H1 (cell line): ENCODE measurements at regions of chr19 and their contacts with region 1.

Region 1: DNA sequence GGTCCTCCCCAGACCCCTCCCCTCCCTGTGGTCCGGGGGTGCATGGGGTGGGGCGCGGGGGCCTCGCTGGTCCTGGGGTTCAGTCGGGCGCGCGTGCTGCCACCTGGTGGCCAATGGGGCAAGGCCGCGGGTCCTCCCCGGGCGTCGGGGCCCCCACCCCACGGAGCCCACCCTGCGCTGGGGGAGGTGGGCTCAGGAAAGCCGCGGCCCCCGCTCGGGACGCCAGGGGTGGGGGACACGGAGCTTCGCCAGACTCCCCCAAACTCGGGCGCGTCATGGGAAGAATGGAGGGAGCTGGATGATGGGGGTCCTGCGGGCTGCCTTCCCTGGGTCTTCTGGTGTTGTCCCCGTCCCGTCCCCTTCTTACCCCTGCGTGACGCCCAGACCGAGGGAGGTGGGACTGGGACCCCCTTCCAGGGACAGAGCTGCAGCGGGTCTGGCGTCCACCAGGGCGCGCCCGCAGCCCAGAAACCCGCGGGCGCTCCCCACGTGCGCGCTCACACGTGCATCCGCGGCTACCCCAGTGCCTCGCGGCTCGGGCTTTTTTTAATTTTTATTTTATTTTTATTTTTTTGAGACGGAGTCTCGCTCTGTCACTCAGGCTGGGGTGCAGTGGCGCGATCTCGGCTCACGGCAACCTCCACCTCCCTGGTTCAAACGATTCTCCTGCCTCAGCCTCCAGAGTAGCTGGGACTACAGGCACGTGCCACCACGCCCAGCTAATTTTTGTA is 19.8 kb upstream of the TCF3 start:
- DNase-seq: peak in 1 of 2 experiments; percentile 81
- H3K4me3 ChIP-seq: peak overlapping the region in 3 of 4 experiments; percentile 5 to 60 (median 6); a peak in 4 of 8 replicates
- H3K27ac ChIP-seq: no peak overlapping the region
- H3K4me1 ChIP-seq: peaks cover 0 to 16% (median 10%) of the 10 kb centered on the region in 4 experiments; a peak in 6 of 7 replicates
- H3K27me3 ChIP-seq: peaks cover 34 to 91% (median 80%) of the 10 kb centered on the region in 4 experiments
- CTCF ChIP-seq: peak; percentile 47 to 82 (median 80)
- EP300 ChIP-seq: no peak
- POLR2A ChIP-seq: no peak
- RAD21 ChIP-seq: peak; percentile 79 to 85

Region 2: DNA sequence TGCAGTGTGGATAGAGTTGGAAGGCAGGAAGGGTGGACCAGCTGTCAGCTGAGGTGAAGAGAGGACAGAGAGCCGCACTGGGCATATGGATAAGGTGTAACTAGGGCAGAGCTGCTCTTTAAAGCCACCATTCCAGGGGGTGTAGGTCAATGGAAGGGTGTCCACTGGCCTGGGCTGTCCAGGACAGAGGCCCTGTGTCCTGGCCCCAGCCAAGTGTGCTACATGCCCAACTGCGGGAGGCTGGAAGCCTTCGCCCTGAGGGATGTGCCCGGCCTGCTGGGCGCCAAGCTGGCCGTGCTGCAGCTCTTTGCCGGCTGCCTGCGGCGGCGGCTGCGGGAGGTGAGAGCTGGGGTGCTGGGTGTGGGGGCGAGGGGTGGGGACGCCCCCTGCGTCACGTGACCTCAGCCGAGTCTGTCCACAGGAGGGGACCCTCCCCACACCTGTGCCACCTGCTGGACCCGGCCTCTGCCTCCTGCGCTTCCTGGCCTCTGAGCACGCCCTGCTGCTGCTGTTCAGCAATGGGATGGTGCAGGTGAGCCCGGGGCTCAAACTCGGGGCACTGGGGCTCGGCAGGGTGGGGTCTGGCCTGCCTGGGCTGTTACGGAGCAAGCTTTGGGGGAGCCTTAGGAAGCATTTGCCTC is 138.6 kb before region 1 on chr19:
- CTCF ChIA-PET with region 1: no interaction called
- POLR2A ChIA-PET with region 1: no interaction called
- DNase-seq: no peak
- H3K4me3 ChIP-seq: no peak overlapping the region
- H3K27ac ChIP-seq: no peak overlapping the region
- H3K4me1 ChIP-seq: no peaks in the 10 kb centered on the region
- H3K27me3 ChIP-seq: no peaks in the 10 kb centered on the region; a peak in 1 of 7 replicates
- CTCF ChIP-seq: no peak
- EP300 ChIP-seq: no peak
- POLR2A ChIP-seq: no peak
- RAD21 ChIP-seq: no peak

Region 3: GRCh38 chr19:1560286-1560882 is 111.8 kb before region 1 on chr19:
- CTCF ChIA-PET with region 1: no interaction called
- POLR2A ChIA-PET with region 1: no interaction called
- DNase-seq: no peak
- H3K4me3 ChIP-seq: no peak overlapping the region
- H3K27ac ChIP-seq: no peak overlapping the region
- H3K4me1 ChIP-seq: no peaks in the 10 kb centered on the region; a peak in 1 of 7 replicates
- H3K27me3 ChIP-seq: no peaks in the 10 kb centered on the region
- CTCF ChIP-seq: no peak
- EP300 ChIP-seq: no peak
- POLR2A ChIP-seq: no peak
- RAD21 ChIP-seq: no peak

Region 4: DNA sequence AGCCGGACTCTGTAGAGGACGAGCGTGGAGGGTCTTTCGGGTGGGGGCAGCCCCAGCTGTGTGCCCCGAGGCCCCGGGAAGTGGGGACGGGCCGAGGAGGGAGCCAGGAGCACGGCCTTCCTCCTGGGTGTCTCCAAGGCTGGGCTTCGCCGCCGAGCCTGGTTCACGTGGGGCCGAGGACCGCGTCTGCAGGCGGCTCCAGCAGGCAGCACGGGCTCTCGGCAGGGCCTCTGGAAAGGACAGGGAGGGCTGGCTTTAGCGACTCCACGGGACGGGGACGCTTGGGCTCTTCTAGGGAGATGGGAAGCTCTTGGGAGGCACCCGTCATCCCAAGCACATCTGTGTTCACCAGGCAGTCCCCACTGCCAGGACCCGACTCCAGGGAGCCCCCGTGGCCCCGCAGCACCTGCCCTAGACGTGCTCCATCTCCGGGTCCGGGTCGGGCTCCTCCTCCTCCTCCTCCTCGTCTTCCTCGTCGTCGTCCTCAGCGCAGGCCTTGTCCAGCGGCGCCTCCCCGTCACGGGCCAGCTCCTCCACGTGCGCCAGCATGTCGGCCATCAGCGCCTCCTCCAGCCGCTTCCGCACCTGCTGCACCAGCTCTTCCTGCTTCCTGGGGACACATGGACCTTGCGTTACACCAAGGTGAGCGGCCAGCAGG is 94.1 kb before region 1 on chr19:
- CTCF ChIA-PET with region 1: no interaction called
- POLR2A ChIA-PET with region 1: no interaction called
- DNase-seq: no peak
- H3K4me3 ChIP-seq: no peak overlapping the region
- H3K27ac ChIP-seq: no peak overlapping the region; the same call in 1 of the 2 replicates
- H3K4me1 ChIP-seq: no peaks in the 10 kb centered on the region
- H3K27me3 ChIP-seq: no peaks in the 10 kb centered on the region
- CTCF ChIP-seq: no peak
- EP300 ChIP-seq: no peak
- POLR2A ChIP-seq: no peak
- RAD21 ChIP-seq: no peak

Region 5: DNA sequence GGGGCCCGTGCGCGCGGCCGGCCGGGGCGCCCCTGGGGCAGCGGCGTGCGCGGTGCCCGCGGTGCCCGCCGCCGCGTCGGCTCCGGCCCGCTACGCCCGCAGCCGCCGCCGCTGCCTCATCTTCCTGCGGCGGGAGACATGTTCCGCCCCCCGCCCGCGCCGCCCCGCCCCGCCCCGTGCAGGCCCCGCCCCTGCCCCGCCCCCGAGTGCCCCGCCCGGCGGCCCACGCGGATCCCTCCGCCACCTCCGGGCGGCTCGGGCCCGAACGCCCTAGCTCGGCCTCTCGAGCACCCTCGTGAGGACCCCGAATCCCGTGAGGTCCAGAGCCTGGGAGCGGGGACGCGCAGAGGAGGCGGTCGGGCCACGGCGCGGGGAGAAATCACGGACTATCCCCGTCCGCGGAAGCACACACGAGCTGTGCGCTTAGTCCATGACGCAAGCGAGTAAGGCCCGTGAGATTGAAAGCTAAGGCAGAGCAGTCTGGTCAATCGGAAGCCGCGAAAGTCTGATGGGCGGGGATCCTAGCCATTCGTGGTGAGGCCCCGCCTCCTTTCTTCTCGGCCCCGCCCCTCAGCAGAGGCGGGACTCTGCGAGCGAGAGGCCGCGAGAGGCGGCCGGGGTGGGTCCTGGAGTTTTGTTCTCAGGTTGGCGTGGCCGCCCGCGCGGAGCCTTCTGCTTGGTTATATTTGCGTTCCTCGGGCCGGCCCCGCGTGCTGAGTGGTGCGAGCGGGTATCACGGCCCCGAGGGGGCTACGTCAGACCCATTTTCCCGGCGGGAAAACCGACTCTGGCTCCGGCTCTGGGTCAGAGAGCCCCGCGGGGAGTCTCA is 19.5 kb before region 1 on chr19 and contains the start of gene TCF3:
- CTCF ChIA-PET with region 1: interaction called, 10 read pairs
- POLR2A ChIA-PET with region 1: interaction called, 6 read pairs
- DNase-seq: peak; percentile 98
- H3K4me3 ChIP-seq: peak within 1 kb of the TSS; percentile 69 to 84 (median 74)
- H3K27ac ChIP-seq: peak within 1 kb of the TSS; percentile 100
- H3K4me1 ChIP-seq: peaks cover 0 to 20% (median 4%) of the 10 kb centered on the region in 4 experiments; a peak in 6 of 7 replicates
- H3K27me3 ChIP-seq: no peaks in the 10 kb centered on the region; a peak in 1 of 7 replicates
- CTCF ChIP-seq: no peak
- EP300 ChIP-seq: no peak
- POLR2A ChIP-seq: peak in 1 of 2 experiments; percentile 52; a peak in 2 of 3 replicates
- RAD21 ChIP-seq: no peak
- total RNA-seq, gene TCF3: 340 and 348 TPM in 2 replicates

Region 6: GRCh38 chr19:1747285-1748114 is 75.3 kb after region 1 on chr19:
- CTCF ChIA-PET with region 1: interaction called, 24 read pairs
- POLR2A ChIA-PET with region 1: interaction called, 4 read pairs
- DNase-seq: peak in 1 of 2 experiments; percentile 54
- H3K4me3 ChIP-seq: peak overlapping the region in 3 of 4 experiments; percentile 22 to 59 (median 34); a peak in 3 of 8 replicates
- H3K27ac ChIP-seq: no peak overlapping the region
- H3K4me1 ChIP-seq: peaks cover 0 to 46% (median 27%) of the 10 kb centered on the region in 4 experiments; a peak in 6 of 7 replicates
- H3K27me3 ChIP-seq: peaks cover 67 to 86% (median 78%) of the 10 kb centered on the region in 4 experiments
- CTCF ChIP-seq: no peak
- EP300 ChIP-seq: no peak
- POLR2A ChIP-seq: no peak
- RAD21 ChIP-seq: no peak

Region 7: DNA sequence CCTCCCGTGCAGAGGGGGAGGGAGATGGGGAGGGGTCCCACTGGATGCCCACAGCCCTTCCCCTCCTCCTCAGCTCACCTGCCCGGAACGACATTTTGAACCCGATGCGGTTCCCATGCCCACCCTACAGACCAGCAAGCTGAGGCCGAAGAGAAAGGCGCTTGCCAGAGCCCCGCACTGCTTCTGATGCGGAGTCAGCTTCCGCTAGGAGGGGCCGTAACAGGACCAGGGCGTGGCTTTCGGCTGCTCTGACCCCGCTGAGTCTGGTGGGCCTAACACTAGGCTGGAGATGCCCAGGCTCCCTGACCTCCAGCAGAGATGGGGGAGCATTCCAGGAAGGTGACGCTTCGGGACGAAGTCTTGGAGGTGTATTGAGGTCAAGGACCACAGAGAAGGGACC is 87.8 kb after region 1 on chr19:
- CTCF ChIA-PET with region 1: interaction called, 52 read pairs
- POLR2A ChIA-PET with region 1: interaction called, 3 read pairs
- DNase-seq: peak in 1 of 2 experiments; percentile 62
- H3K4me3 ChIP-seq: no peak overlapping the region
- H3K27ac ChIP-seq: no peak overlapping the region
- H3K4me1 ChIP-seq: peaks cover 0 to 25% (median 13%) of the 10 kb centered on the region in 4 experiments; a peak in 6 of 7 replicates
- H3K27me3 ChIP-seq: peaks cover 98 to 100% (median 100%) of the 10 kb centered on the region in 4 experiments
- CTCF ChIP-seq: no peak
- EP300 ChIP-seq: no peak
- POLR2A ChIP-seq: no peak
- RAD21 ChIP-seq: no peak

Region 8: GRCh38 chr19:1794424-1795172 is 122.4 kb after region 1 on chr19:
- CTCF ChIA-PET with region 1: interaction called, 12 read pairs
- POLR2A ChIA-PET with region 1: interaction called, 3 read pairs
- DNase-seq: peak in 1 of 2 experiments; percentile 39
- H3K4me3 ChIP-seq: no peak overlapping the region
- H3K27ac ChIP-seq: no peak overlapping the region
- H3K4me1 ChIP-seq: peaks cover 0 to 15% (median 8%) of the 10 kb centered on the region in 4 experiments; a peak in 5 of 7 replicates
- H3K27me3 ChIP-seq: peaks cover 0 to 4% (median under 1%) of the 10 kb centered on the region in 4 experiments; a peak in 2 of 7 replicates
- CTCF ChIP-seq: peak in 2 of 3 experiments; percentile 7 to 15; a peak in 2 of 4 replicates
- EP300 ChIP-seq: no peak
- POLR2A ChIP-seq: no peak
- RAD21 ChIP-seq: no peak; a peak in 1 of 4 replicates